ENCODE measurements at regions of chr1 and their contacts with region 1.

Region 1: DNA sequence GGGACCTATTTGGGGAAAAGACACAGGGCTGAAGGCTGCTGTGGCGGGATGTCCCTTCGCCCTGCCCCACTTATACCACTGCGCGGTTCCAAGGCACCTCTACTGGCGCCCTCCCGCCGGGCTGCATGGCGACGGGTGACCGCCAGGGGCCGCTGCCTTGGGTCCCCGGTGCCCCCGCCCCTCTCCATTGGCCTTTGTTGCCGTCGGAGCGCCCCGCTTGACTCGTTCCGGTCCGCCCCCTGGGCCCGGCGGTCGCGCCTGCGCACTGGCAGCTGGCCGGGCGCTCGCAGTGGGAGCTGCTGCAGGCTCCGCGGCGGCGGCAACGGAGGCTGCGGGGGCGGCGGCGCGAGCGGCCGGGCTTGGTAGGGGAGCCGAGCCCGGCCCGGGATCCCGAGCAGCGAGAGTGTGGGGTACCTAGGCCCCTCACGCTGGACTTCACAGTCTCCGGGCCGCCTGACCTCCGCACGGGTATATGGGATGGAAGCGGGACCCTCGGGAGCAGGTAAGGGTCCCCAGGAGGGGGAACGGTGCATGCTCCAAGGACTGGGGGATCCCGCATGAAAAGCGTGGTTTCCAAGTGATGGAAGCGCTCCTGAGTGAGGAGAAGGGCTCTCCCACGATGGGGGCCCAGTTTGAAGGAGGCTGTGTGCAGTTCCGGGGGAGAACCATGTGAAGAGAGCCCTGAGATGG is at the start of gene AGO1:
- DNase-seq: peak; percentile 89 to 97 (median 93)
- H3K4me3 ChIP-seq: peak within 1 kb of the TSS; percentile 76 to 100 (median 99)
- H3K27ac ChIP-seq: peak within 1 kb of the TSS; percentile 50 to 98 (median 90)
- H3K27me3 ChIP-seq: no peaks in the 10 kb centered on the region
- CTCF ChIP-seq: peak; percentile 90 to 100 (median 98)
- total RNA-seq, gene AGO1: 37.9 to 56.3 (median 44.8) TPM

Region 2: DNA sequence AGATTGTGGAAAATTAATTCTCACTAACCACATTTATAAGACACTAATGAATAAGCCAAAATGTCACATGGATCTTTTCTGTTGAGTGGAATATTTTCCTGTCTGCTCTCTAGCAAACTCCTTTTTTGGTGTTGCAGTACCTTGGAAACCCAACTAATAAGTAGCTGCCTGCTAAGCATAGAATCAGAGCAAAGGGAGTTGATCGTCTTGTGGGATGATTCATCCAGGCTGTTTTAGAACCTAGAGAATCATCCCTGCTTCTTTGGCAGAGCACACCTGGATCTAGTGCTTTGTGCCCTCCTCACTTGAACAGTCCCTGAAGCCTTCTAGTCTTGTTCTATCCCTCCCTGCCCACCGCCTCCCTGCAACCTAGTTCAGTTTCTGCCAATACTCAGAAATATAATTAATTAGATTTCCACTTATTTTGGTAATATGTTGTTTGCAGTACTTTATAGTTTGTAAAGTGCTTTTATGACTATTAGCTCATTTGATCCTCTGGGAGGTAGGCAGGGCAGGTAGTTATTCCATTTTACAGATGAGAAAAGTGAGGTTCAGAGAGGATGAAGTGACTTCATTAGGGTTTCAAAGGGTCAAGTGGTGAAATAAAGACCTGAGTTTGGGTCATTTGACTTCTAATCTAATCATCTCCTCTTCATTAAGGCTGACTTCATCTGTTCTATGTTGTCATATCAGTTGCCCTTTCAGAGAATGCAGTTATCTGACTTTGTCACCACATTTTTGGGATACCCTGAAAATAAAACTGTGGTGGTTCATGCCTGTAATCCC is 72.8 kb before region 1 on chr1:
- intact Hi-C with region 1: loop called in 1 of 2 experiments (anchors 5 kb)
- DNase-seq: no peak
- H3K4me3 ChIP-seq: peak overlapping the region in 36 of 59 donors; percentile 2 to 97 (median 90)
- H3K27ac ChIP-seq: peak overlapping the region in 22 of 59 donors; percentile 1 to 95 (median 52)
- H3K27me3 ChIP-seq: no peaks in the 10 kb centered on the region
- CTCF ChIP-seq: no peak

Region 3: DNA sequence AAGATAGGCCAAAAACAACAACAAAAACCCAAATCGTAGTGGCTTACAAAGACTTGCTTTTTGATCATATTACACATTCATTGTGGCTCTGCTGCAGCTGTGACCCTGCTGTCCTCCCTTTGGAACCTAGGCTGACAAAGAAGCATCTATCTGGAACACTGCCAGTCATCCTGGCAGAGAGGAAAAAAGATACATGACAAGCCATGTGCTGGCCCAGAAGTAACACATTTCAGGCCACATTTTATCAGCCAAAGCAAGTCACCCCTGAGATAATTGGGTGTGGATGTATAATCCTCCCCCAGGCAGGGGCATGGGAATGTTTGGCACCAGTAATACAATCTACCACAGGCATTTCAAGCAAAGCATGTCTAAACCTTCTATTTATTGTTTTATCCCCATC is 37.3 kb before region 1 on chr1:
- intact Hi-C with region 1: loop called in 1 of 2 experiments (anchors 5 kb)
- DNase-seq: peak in 3 of 10 donors; percentile 9 to 60 (median 33)
- H3K4me3 ChIP-seq: peak overlapping the region in 3 of 59 donors; percentile 12 to 24 (median 13)
- H3K27ac ChIP-seq: peak overlapping the region in 58 of 59 donors; percentile 47 to 95 (median 86)
- H3K27me3 ChIP-seq: no peaks in the 10 kb centered on the region
- CTCF ChIP-seq: peak in 1 of 56 donors; percentile 13

Region 4: GRCh38 chr1:35930593-35931445 is 47.7 kb after region 1 on chr1 and contains the start of gene AGO3:
- intact Hi-C with region 1: loop called (anchors 2 to 5 kb)
- DNase-seq: peak; percentile 63 to 91 (median 76)
- H3K4me3 ChIP-seq: peak within 1 kb of the TSS; percentile 64 to 99 (median 92)
- H3K27ac ChIP-seq: peak within 1 kb of the TSS; percentile 53 to 99 (median 96)
- H3K27me3 ChIP-seq: no peaks in the 10 kb centered on the region
- CTCF ChIP-seq: peak in 6 of 56 donors; percentile 4 to 32 (median 13)
- total RNA-seq, gene AGO3: 29.2 to 63.9 (median 43.8) TPM

Region 5: GRCh38 chr1:36088575-36089443 is 205.7 kb after region 1 on chr1 and contains the start of gene ADPRS:
- intact Hi-C with region 1: loop called (anchors 5 to 10 kb)
- DNase-seq: peak; percentile 77 to 92 (median 84)
- H3K4me3 ChIP-seq: peak within 1 kb of the TSS; percentile 71 to 100 (median 95)
- H3K27ac ChIP-seq: peak within 1 kb of the TSS; percentile 43 to 97 (median 90)
- H3K27me3 ChIP-seq: peaks cover 0 to 4% (median 0%) of the 10 kb centered on the region in 45 donors
- CTCF ChIP-seq: peak; percentile 86 to 100 (median 99)
- total RNA-seq, gene ADPRS: 14.4 to 31.1 (median 20.5) TPM

Measured in dorsolateral prefrontal cortex (tissue), 120 donors.